Activated naive CD4-positive, alpha-beta T cell treated with anti-CD3 and anti-CD28 coated beads, Interleukin-2, amount 10 ng/mL, durations not matched to agents 7 days and 5 days (primary cell): ENCODE measurements at regions of chr11 and their contacts with region 1.

Region 1: DNA sequence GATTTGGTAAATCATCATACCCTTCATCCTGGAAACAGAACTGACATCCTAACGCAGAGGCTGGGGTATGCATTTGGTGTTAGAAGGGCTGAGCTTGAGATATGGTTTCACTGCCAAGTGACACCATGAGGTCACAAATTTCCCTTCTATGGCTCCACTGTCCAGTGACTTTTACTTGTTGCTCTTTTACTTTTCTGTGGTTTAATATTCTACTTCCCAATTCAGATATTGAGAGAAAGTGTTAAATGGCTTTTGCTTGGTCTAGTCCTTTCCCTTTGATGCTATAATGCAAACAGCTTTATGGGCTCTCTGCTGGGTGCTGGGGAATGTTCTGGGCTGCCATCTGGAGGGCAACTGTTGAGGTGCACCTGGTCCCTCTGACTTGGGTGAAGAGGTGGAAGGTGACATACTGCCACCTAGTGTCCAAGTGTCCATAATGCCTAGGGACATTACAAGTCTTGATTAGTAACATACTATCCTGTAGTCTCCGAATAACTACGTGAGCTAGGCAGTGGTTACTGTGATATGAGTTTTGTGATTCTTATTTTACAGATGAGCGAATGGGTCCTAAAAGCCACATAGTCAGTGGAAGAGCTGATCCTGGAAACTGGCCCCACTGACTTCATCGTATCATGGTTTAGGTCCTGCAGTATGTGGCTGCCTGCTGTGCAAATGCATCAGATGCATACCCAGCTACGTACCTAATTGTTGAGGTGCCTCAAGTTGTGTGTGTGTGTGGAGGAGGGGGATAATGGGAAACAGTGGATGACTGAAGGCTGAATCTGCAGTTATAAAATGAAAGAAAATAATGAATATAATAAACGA is 149.1 kb upstream of the RAG2 start:
- DNase-seq: peak; percentile 92
- H3K4me3 Mint-ChIP-seq: no peak overlapping the region
- H3K27ac Mint-ChIP-seq: no peak overlapping the region
- H3K4me1 Mint-ChIP-seq: no peaks in the 10 kb centered on the region
- H3K27me3 Mint-ChIP-seq: peaks cover 21% of the 10 kb centered on the region

Region 2: GRCh38 chr11:36564376-36565030 is 182.6 kb before region 1 on chr11:
- CTCF ChIA-PET with region 1: interaction called, 204 read pairs
- DNase-seq: peak; percentile 74
- H3K4me3 Mint-ChIP-seq: peak overlapping the region; percentile 29
- H3K27ac Mint-ChIP-seq: no peak overlapping the region
- H3K4me1 Mint-ChIP-seq: peaks cover 12% of the 10 kb centered on the region
- H3K27me3 Mint-ChIP-seq: peaks cover 53% of the 10 kb centered on the region

Region 3: GRCh38 chr11:36672813-36673450 is 74.2 kb before region 1 on chr11:
- CTCF ChIA-PET with region 1: interaction called, 13 read pairs
- DNase-seq: no peak
- H3K4me3 Mint-ChIP-seq: no peak overlapping the region
- H3K27ac Mint-ChIP-seq: no peak overlapping the region
- H3K4me1 Mint-ChIP-seq: no peaks in the 10 kb centered on the region
- H3K27me3 Mint-ChIP-seq: no peaks in the 10 kb centered on the region

Region 4: GRCh38 chr11:36702330-36703055 is 44.6 kb before region 1 on chr11:
- CTCF ChIA-PET with region 1: interaction called, 103 read pairs
- DNase-seq: no peak
- H3K4me3 Mint-ChIP-seq: no peak overlapping the region
- H3K27ac Mint-ChIP-seq: no peak overlapping the region
- H3K4me1 Mint-ChIP-seq: no peaks in the 10 kb centered on the region
- H3K27me3 Mint-ChIP-seq: no peaks in the 10 kb centered on the region

Region 5: GRCh38 chr11:36711106-36711825 is 35.8 kb before region 1 on chr11:
- CTCF ChIA-PET with region 1: interaction called, 21 read pairs
- DNase-seq: no peak
- H3K4me3 Mint-ChIP-seq: no peak overlapping the region
- H3K27ac Mint-ChIP-seq: no peak overlapping the region
- H3K4me1 Mint-ChIP-seq: no peaks in the 10 kb centered on the region
- H3K27me3 Mint-ChIP-seq: no peaks in the 10 kb centered on the region